T-cell (primary cell): ENCODE measurements at regions of chr9 and their contacts with region 1.

Region 1: GRCh38 chr9:99130069-99130468 is 25.2 kb downstream of the TGFBR1 start:
- DNase-seq: peak in 1 of 35 experiments; percentile 10
- ATAC-seq: peak in 1 of 4 experiments; percentile 37
- H3K4me3 ChIP-seq: no peak overlapping the region
- H3K4me3 Mint-ChIP-seq: peak overlapping the region in 1 of 3 donors; percentile 34
- H3K27ac ChIP-seq: no peak overlapping the region
- H3K27ac Mint-ChIP-seq: peak overlapping the region; percentile 60 to 61
- H3K4me1 ChIP-seq: peaks cover 35 to 67% of the 10 kb centered on the region in 2 experiments
- H3K4me1 Mint-ChIP-seq: peaks cover 76 to 88% (median 84%) of the 10 kb centered on the region in 3 donors
- H3K27me3 ChIP-seq: no peaks in the 10 kb centered on the region
- H3K27me3 Mint-ChIP-seq: no peaks in the 10 kb centered on the region

Region 2: DNA sequence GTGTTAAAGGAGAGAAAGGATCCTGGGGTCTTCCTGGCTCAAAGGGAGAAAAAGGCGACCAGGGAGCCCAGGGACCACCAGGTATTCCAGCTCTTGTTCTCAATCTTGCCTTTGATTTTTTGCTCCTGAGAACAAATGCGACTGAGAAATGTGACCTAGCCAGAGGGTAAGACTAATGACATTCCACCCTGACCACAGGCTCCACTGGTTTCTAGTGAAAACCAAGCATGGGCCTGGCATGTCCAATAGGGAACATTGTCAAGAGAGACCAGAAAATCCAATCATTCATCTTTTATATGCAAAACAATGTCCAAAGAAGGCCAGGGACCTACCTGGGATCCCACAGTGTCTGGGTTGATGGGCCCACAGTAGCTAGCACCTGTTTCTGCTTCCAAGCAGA is 75.5 kb before region 1 on chr9:
- CTCF ChIA-PET with region 1: interaction called in 1 of 2 experiments, 3 read pairs
- POLR2A ChIA-PET with region 1: interaction called, 3 to 14 read pairs
- DNase-seq: no peak
- ATAC-seq: no peak
- H3K4me3 ChIP-seq: no peak overlapping the region
- H3K4me3 Mint-ChIP-seq: no peak overlapping the region
- H3K27ac ChIP-seq: no peak overlapping the region
- H3K27ac Mint-ChIP-seq: no peak overlapping the region
- H3K4me1 ChIP-seq: peaks cover 36 to 89% of the 10 kb centered on the region in 2 experiments
- H3K4me1 Mint-ChIP-seq: peaks cover 80 to 84% (median 82%) of the 10 kb centered on the region in 3 donors
- H3K27me3 ChIP-seq: no peaks in the 10 kb centered on the region
- H3K27me3 Mint-ChIP-seq: no peaks in the 10 kb centered on the region

Region 3: DNA sequence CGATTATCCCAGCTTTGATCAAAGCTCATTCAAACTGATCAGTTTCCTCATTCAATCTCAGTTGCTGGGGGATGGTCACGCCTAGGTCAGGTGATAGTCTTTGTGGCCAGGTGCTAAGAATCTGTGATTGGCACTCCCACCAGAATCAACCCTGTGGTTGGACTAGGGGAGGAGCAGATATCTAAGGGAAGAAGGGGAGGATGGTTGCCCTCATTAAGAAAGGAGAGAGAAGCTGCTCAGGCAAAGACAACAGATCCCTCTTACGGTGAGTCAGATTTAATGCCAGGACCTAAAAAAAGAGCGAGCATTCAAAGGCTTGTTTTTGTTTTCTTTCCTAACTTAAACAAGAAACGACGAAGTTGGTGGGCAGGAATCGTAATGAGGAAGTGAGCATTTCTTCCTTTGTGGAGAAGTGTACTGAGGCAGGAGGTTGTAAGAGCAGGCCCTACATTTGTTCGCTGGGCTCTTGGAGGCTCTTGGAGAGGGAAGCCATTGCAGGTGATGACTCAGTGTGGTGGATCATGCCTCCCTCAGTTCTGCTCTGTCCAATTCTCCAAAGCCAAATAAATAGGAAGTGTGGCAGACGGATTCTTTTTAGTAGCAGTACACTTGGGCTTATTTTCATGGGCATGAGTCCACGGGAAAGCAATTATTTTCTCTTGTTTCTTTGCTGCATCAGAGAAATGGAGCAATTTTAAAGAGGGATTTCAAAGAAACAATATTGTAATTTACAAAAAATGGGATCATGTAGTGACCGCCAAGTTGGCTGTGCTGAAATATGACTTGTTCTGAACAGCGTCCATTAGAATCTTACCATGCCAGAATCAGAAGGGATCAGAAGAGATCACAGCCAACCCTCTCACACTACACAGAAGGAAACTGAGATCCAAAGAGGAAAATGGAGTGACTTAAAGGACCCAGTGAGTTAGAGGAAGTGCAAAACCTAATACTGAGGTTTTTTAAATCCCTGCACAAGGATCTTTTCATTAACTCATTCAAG is 43.8 kb before region 1 on chr9:
- CTCF ChIA-PET with region 1: no interaction called
- POLR2A ChIA-PET with region 1: no interaction called
- DNase-seq: no peak
- ATAC-seq: no peak
- H3K4me3 ChIP-seq: no peak overlapping the region
- H3K4me3 Mint-ChIP-seq: no peak overlapping the region
- H3K27ac ChIP-seq: no peak overlapping the region
- H3K27ac Mint-ChIP-seq: no peak overlapping the region
- H3K4me1 ChIP-seq: peaks cover 0 to 14% of the 10 kb centered on the region in 2 experiments
- H3K4me1 Mint-ChIP-seq: peaks cover 24 to 32% (median 25%) of the 10 kb centered on the region in 3 donors
- H3K27me3 ChIP-seq: no peaks in the 10 kb centered on the region
- H3K27me3 Mint-ChIP-seq: no peaks in the 10 kb centered on the region

Region 4: DNA sequence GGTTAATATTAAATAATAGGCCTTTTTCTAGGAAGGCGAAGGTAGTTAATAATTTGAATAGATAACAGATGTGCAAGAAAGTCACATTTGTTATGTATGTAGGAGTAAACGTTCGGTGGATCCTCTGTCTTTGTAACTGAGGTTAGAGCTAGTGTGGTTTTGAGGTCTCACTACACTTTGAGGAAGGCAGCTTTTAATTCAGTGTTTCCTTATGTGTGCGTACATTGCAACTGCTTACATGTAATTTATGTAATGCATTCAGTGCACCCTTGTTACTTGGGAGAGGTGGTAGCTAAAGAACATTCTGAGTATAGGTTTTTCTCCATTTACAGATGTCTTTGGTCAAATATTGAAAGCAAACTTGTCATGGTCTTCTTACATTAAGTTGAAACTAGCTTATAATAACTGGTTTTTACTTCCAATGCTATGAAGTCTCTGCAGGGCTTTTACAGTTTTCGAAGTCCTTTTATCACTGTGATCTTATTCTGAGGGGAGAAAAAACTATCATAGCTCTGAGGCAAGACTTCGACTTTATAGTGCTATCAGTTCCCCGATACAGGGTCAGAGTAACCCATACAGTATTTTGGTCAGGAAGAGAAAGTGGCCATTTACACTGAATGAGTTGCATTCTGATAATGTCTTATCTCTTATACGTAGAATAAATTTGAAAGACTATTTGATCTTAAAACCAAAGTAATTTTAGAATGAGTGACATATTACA is 20.5 kb after region 1 on chr9:
- CTCF ChIA-PET with region 1: interaction called in 1 of 2 experiments, 3 read pairs
- POLR2A ChIA-PET with region 1: interaction called in 1 of 2 experiments, 12 read pairs
- DNase-seq: peak in 5 of 35 experiments; percentile 6 to 63 (median 22)
- ATAC-seq: peak; percentile 88 to 100 (median 95)
- H3K4me3 ChIP-seq: peak overlapping the region in 1 of 2 donors; percentile 15
- H3K4me3 Mint-ChIP-seq: peak overlapping the region in 2 of 3 donors; percentile 2 to 39
- H3K27ac ChIP-seq: peak overlapping the region; percentile 31
- H3K27ac Mint-ChIP-seq: peak overlapping the region; percentile 76 to 84
- H3K4me1 ChIP-seq: peaks cover 0 to 27% of the 10 kb centered on the region in 2 experiments
- H3K4me1 Mint-ChIP-seq: peaks cover 30 to 42% (median 34%) of the 10 kb centered on the region in 3 donors
- H3K27me3 ChIP-seq: no peaks in the 10 kb centered on the region
- H3K27me3 Mint-ChIP-seq: no peaks in the 10 kb centered on the region

Region 5: DNA sequence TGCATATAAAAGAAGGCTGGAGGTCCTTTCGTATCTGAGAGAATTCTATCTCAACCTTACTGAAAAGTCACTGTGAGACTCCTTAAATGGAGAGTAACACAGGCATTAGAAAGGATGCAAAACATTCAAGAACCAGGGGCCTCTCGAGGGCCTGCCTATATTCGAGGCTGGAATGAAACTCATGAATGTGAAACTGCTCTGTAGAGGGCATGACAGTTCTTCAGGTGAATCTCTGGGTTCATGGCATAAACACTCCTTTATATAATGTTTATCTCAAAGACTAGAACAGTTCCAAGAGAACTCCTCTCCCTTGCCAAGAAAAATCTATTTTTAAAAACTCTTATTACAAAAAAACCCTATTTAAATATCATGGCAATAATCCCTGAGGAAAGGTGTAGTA is 205.9 kb after region 1 on chr9:
- CTCF ChIA-PET with region 1: no interaction called
- POLR2A ChIA-PET with region 1: no interaction called
- DNase-seq: no peak
- ATAC-seq: no peak
- H3K4me3 ChIP-seq: no peak overlapping the region
- H3K4me3 Mint-ChIP-seq: no peak overlapping the region
- H3K27ac ChIP-seq: no peak overlapping the region
- H3K27ac Mint-ChIP-seq: no peak overlapping the region
- H3K4me1 ChIP-seq: no peaks in the 10 kb centered on the region
- H3K4me1 Mint-ChIP-seq: no peaks in the 10 kb centered on the region
- H3K27me3 ChIP-seq: peaks cover 0 to 4% of the 10 kb centered on the region in 2 experiments
- H3K27me3 Mint-ChIP-seq: peaks cover 0 to 4% of the 10 kb centered on the region in 2 donors

Region 6: GRCh38 chr9:100105861-100106260 is 975.8 kb after region 1 on chr9:
- CTCF ChIA-PET with region 1: interaction called in 1 of 2 experiments, 12 read pairs
- POLR2A ChIA-PET with region 1: no interaction called
- DNase-seq: no peak
- ATAC-seq: no peak
- H3K4me3 ChIP-seq: no peak overlapping the region
- H3K4me3 Mint-ChIP-seq: no peak overlapping the region
- H3K27ac ChIP-seq: no peak overlapping the region
- H3K27ac Mint-ChIP-seq: no peak overlapping the region
- H3K4me1 ChIP-seq: no peaks in the 10 kb centered on the region
- H3K4me1 Mint-ChIP-seq: peaks cover 0 to 3% (median 0%) of the 10 kb centered on the region in 3 donors
- H3K27me3 ChIP-seq: no peaks in the 10 kb centered on the region
- H3K27me3 Mint-ChIP-seq: no peaks in the 10 kb centered on the region